ENCODE measurements at regions of chr3 and their contacts with region 1.

Region 1: GRCh38 chr3:151838583-151839312 is 24.8 kb downstream of the AADAC start:
- DNase-seq: peak in 4 of 5 donors; percentile 19 to 32 (median 30)
- H3K4me3 ChIP-seq: no peak overlapping the region
- H3K4me3 Mint-ChIP-seq: no peak overlapping the region
- H3K27ac ChIP-seq: no peak overlapping the region
- H3K27ac Mint-ChIP-seq: no peak overlapping the region
- H3K4me1 ChIP-seq: no peaks in the 10 kb centered on the region
- H3K4me1 Mint-ChIP-seq: peaks cover 0 to 2% (median under 1%) of the 10 kb centered on the region in 4 donors
- H3K27me3 ChIP-seq: no peaks in the 10 kb centered on the region
- H3K27me3 Mint-ChIP-seq: peaks cover 5 to 7% of the 10 kb centered on the region in 2 donors

Region 2: GRCh38 chr3:151156618-151157216 is 682.0 kb before region 1 on chr3:
- CTCF ChIA-PET with region 1: no interaction called
- POLR2A ChIA-PET with region 1: no interaction called
- intact Hi-C with region 1: loop called (anchors 2 kb)
- DNase-seq: peak; percentile 42 to 49 (median 45)
- H3K4me3 ChIP-seq: no peak overlapping the region
- H3K4me3 Mint-ChIP-seq: no peak overlapping the region
- H3K27ac ChIP-seq: no peak overlapping the region
- H3K27ac Mint-ChIP-seq: no peak overlapping the region
- H3K4me1 ChIP-seq: no peaks in the 10 kb centered on the region
- H3K4me1 Mint-ChIP-seq: peaks cover 0 to 2% (median 0%) of the 10 kb centered on the region in 4 donors
- H3K27me3 ChIP-seq: no peaks in the 10 kb centered on the region
- H3K27me3 Mint-ChIP-seq: peaks cover 8% of the 10 kb centered on the region in 2 donors

Region 3: GRCh38 chr3:151439652-151440129 is 399.1 kb before region 1 on chr3:
- CTCF ChIA-PET with region 1: interaction called, 7 read pairs
- POLR2A ChIA-PET with region 1: no interaction called
- intact Hi-C with region 1: loop called (anchors 1 kb)
- DNase-seq: peak in 4 of 5 donors; percentile 17 to 30 (median 22)
- H3K4me3 ChIP-seq: no peak overlapping the region
- H3K4me3 Mint-ChIP-seq: no peak overlapping the region
- H3K27ac ChIP-seq: no peak overlapping the region
- H3K27ac Mint-ChIP-seq: no peak overlapping the region
- H3K4me1 ChIP-seq: no peaks in the 10 kb centered on the region
- H3K4me1 Mint-ChIP-seq: no peaks in the 10 kb centered on the region
- H3K27me3 ChIP-seq: no peaks in the 10 kb centered on the region
- H3K27me3 Mint-ChIP-seq: peaks cover 0 to 2% of the 10 kb centered on the region in 2 donors

Region 4: GRCh38 chr3:151468284-151468917 is 370.3 kb before region 1 on chr3:
- CTCF ChIA-PET with region 1: interaction called, 5 read pairs
- POLR2A ChIA-PET with region 1: no interaction called
- intact Hi-C with region 1: loop called (anchors 1 kb)
- DNase-seq: peak in 4 of 5 donors; percentile 34 to 51 (median 38)
- H3K4me3 ChIP-seq: no peak overlapping the region
- H3K4me3 Mint-ChIP-seq: no peak overlapping the region
- H3K27ac ChIP-seq: no peak overlapping the region
- H3K27ac Mint-ChIP-seq: no peak overlapping the region
- H3K4me1 ChIP-seq: no peaks in the 10 kb centered on the region
- H3K4me1 Mint-ChIP-seq: no peaks in the 10 kb centered on the region
- H3K27me3 ChIP-seq: no peaks in the 10 kb centered on the region
- H3K27me3 Mint-ChIP-seq: peaks cover 8 to 10% of the 10 kb centered on the region in 2 donors

Region 5: GRCh38 chr3:152452318-152452717 is 613.6 kb after region 1 on chr3:
- CTCF ChIA-PET with region 1: no interaction called
- POLR2A ChIA-PET with region 1: no interaction called
- intact Hi-C with region 1: no loop called
- DNase-seq: no peak
- H3K4me3 ChIP-seq: no peak overlapping the region
- H3K4me3 Mint-ChIP-seq: peak overlapping the region in 2 of 8 donors; percentile 2 to 17
- H3K27ac ChIP-seq: no peak overlapping the region
- H3K27ac Mint-ChIP-seq: peak overlapping the region in 5 of 7 donors; percentile 0 to 72 (median 43)
- H3K4me1 ChIP-seq: peaks cover 64% of the 10 kb centered on the region
- H3K4me1 Mint-ChIP-seq: peaks cover 34 to 63% (median 44%) of the 10 kb centered on the region in 4 donors
- H3K27me3 ChIP-seq: no peaks in the 10 kb centered on the region
- H3K27me3 Mint-ChIP-seq: no peaks in the 10 kb centered on the region

Measured in CD4-positive, alpha-beta memory T cell (primary cell).